Posterior cingulate gyrus (tissue), 11 donors: ENCODE measurements at regions of chr9 and their contacts with region 1.

Region 1: GRCh38 chr9:23492126-23493002 is 333.7 kb downstream of the ELAVL2 start:
- DNase-seq: no peak

Region 2: DNA sequence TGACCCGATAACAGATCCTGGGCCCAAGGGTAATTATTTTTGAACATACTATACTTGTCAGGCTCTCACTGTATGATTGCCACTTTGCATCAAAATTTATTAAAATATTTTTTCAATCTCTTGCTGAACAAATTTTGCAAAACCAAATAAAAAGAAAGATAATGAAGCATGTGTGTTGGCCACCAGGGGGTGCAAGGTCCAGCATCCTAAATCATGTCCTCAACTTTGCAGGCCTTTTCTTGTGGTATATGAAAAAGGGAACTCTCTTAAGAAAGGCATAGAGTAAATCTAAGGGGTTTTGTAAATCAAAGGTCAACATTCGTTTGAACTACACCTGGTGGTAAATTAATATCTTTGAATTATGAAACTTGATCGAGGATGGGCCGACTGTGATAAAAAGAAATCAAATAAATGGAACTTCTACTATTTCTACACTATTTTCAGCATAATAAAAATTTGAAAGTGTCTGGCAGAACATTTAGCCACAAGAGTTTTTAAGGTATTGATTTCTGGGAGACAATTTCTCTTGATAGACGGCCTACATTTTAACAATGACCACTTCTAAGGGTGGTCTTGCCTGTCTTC is 369.2 kb before region 1 on chr9:
- intact Hi-C with region 1: loop called (anchors 1 kb)
- DNase-seq: peak in 9 of 10 donors; percentile 23 to 86 (median 42)

Region 3: DNA sequence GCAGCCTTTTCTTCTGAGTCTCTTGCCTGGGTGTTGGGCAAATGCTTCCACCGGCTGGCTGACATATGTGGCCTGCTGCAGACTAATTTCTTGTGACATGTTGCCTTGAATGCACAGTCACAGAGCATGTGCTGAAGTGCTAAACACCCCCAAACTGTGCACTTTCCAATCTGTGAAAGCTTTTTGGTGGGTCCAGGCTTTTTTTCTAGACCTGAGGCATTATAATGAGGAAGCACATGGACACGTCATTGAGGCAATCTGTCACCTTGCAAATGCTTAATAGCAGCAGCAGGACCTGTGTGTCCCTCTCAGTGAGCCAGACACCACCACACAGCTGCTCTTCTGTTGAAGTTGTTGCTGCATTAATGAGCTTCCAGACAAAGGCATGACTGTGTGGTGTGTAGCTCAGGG is 59.0 kb after region 1 on chr9:
- intact Hi-C with region 1: loop called (anchors 2 kb)
- DNase-seq: no peak